Calu3 (cell line): ENCODE measurements at regions of chr11 and their contacts with region 1.

Region 1: DNA sequence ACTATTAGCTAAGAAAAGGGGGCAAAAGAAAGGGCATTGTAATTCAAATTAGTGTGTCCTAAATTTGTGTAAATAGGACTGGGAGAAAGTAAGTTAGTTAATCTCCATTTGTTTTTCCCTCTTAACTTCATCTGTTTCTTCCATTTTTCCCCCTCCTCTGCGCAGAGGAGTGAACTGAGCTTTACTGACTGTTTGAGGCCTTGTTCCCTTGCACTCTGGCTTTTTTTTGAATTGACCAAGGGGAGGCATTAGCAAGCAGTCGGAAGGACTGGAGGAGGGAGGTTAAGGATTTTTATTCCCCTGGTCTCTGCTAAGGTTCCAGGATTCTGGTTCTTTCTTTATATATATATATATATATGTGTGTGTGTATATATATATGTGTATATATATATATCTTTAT is 15.2 kb upstream of the FANCF start:
- DNase-seq: no peak
- H3K4me3 Mint-ChIP-seq: no peak overlapping the region
- H3K27ac Mint-ChIP-seq: no peak overlapping the region
- H3K4me1 Mint-ChIP-seq: no peaks in the 10 kb centered on the region
- H3K27me3 Mint-ChIP-seq: no peaks in the 10 kb centered on the region
- CTCF ChIP-seq: no peak

Region 2: DNA sequence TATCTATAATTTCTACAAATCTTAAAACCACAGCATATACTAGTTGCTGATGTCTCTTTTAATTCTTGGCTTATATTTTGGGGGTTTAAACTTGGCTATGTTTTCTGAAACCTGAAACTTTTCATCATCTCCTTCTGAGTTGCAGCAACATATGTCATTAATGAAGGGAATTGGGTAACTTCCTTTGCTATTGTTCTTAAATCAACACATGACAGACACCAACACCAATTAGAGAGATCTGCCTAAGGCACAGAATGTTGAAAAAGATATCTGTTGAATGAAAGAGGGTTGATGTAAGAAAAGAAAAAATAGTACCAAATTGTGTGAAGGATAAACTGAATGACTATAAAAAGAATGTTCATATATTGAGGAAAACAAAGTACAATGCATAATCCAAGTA is 15.3 kb after region 1 on chr11:
- CTCF ChIA-PET with region 1: no interaction called
- intact Hi-C with region 1: loop called (anchors 1 kb)
- DNase-seq: no peak
- H3K4me3 Mint-ChIP-seq: no peak overlapping the region
- H3K27ac Mint-ChIP-seq: no peak overlapping the region
- H3K4me1 Mint-ChIP-seq: no peaks in the 10 kb centered on the region
- H3K27me3 Mint-ChIP-seq: no peaks in the 10 kb centered on the region
- CTCF ChIP-seq: no peak